ENCODE measurements at regions of chr14 and their contacts with region 1.

Region 1: DNA sequence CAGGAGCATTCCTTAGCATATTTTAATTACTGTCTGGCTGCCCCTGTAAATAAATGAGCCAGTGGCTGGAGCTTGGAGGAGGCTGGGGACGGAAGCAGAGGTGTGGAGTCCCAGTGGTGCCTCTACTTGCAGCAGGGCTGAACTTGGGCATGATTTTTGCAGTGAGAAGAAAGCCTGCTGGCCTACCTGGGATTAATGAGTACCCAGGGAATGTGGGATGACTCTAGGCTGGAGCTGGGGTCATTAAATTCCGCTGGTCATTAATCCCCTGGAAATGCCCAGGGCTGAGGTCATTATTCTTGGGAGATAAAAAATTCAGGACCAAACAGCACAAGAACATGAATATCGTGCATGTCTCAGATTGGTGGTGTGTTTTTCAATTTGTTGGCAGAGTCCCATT is 753.3 kb downstream of the VRK1 start:
- DNase-seq: no peak
- H3K4me3 ChIP-seq: no peak overlapping the region
- H3K27ac ChIP-seq: no peak overlapping the region
- H3K4me1 ChIP-seq: no peaks in the 10 kb centered on the region
- H3K27me3 ChIP-seq: no peaks in the 10 kb centered on the region
- CTCF ChIP-seq: no peak
- POLR2A ChIP-seq: no peak

Region 2: GRCh38 chr14:97506626-97507025 is 43.8 kb before region 1 on chr14:
- intact Hi-C with region 1: loop called (anchors 1 kb)
- DNase-seq: no peak
- H3K4me3 ChIP-seq: no peak overlapping the region
- H3K27ac ChIP-seq: no peak overlapping the region
- H3K4me1 ChIP-seq: no peaks in the 10 kb centered on the region
- H3K27me3 ChIP-seq: no peaks in the 10 kb centered on the region
- CTCF ChIP-seq: no peak
- POLR2A ChIP-seq: no peak